Endothelial cell of umbilical vein (primary cell): ENCODE measurements at regions of chr14 and their contacts with region 1.

Region 1: DNA sequence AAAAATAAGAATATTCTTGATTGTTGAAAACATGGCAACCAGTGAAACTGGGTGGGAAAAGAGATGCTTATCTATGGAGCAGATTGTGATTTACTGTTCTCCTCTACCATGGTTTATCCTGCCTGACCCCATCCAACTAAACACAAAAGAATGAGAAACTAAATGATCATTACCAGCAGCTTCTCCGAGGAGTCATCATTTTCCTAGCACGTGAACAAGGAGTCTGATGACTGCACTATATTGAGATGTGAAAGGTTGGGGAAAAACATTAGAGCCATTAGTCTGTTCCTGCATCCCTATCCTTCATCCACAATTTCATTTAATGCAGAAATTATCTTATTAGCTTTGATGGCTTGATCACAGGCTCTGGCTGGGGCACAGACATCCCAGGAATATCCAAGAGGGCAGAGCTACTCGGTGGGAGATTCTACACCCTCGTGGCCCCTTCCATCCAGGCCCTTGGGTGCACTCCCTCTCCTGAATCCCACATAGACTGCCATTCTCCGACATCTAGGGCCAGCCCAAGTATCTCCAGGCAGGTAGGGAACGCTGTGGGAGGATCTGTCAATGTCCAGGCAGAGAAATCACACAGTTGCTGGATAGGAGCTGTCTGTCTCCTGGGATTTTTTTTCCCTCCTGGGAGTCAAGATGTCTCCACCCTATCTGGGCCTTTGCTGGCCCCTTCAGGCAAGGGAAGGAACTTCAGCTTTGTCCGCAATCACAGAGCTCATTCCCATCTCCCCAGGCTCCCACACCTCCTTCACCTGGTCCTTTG is 43.3 kb upstream of the DHRS4 start:
- DNase-seq: peak; percentile 58
- H3K4me3 ChIP-seq: no peak overlapping the region
- H3K27ac ChIP-seq: no peak overlapping the region
- H3K4me1 ChIP-seq: no peaks in the 10 kb centered on the region
- H3K27me3 ChIP-seq: peaks cover 0 to 3% of the 10 kb centered on the region in 2 experiments
- CTCF ChIP-seq: peak; percentile 66 to 84
- POLR2A ChIP-seq: no peak

Region 2: DNA sequence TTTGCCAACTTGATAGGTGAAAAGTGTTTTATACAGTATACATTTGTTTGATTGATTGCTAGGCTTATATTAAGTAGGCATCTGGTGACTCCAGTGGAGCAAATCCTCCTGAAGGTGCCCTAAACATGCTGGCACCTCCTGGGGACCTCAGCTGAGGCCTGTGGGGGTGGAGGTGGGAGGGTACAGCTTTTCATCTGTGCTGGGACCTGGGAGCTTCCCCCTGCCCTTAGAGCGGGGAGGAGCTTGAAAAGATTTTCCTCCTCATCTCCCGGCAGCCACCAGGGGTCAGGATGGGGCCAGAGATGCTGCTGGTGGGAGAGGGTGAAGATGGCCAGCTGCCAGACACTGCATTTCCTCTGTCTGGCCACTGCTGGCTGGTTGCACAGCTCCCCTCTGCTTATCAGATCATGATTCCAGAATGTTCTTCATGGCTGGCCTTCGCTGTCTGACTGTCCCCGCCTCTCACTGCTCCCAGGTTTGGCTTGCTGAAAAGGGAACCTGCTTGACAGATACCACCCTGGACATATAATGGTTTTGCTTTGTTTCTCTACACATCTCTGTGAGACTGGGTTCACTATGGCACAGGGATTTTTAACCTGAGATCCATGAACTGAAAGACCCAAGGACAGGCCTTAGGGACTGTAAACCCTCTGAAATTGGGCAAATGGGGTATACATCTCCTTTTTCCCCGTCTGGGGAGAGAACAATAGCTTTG is 321.2 kb before region 1 on chr14:
- CTCF ChIA-PET with region 1: interaction called, 95 read pairs
- POLR2A ChIA-PET with region 1: no interaction called
- dilution Hi-C with region 1: no loop called
- intact Hi-C with region 1: loop called (anchors 1 kb)
- DNase-seq: peak; percentile 87
- H3K4me3 ChIP-seq: no peak overlapping the region
- H3K27ac ChIP-seq: no peak overlapping the region
- H3K4me1 ChIP-seq: peaks cover 5% of the 10 kb centered on the region
- H3K27me3 ChIP-seq: no peaks in the 10 kb centered on the region
- CTCF ChIP-seq: peak; percentile 76 to 90
- POLR2A ChIP-seq: no peak

Region 3: GRCh38 chr14:23665375-23666192 is 244.7 kb before region 1 on chr14:
- CTCF ChIA-PET with region 1: interaction called, 224 read pairs
- POLR2A ChIA-PET with region 1: no interaction called
- dilution Hi-C with region 1: no loop called
- intact Hi-C with region 1: loop called (anchors 1 kb)
- DNase-seq: peak; percentile 55
- H3K4me3 ChIP-seq: no peak overlapping the region
- H3K27ac ChIP-seq: no peak overlapping the region
- H3K4me1 ChIP-seq: no peaks in the 10 kb centered on the region
- H3K27me3 ChIP-seq: peaks cover 0 to 2% of the 10 kb centered on the region in 2 experiments
- CTCF ChIP-seq: peak; percentile 48 to 62
- POLR2A ChIP-seq: no peak

Region 4: DNA sequence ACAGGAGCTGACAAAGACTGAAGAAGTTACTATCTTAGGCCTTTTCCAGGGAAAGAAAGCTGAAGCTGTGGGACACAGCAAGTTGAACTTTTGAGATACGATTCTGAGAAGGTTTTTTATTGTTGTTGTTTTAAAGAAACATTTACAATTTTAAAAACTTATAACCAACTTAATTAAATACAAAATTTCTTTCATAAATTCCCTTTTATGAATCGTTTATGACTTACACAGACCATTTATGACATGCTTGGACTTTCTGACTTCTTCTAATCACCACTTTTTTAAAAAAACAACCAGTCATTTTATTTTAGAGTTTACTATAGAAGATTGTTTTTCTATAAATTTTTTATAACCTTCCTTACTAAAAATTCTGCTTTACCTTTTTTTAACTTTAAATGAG is 205.4 kb before region 1 on chr14:
- CTCF ChIA-PET with region 1: no interaction called
- POLR2A ChIA-PET with region 1: no interaction called
- dilution Hi-C with region 1: no loop called
- intact Hi-C with region 1: no loop called
- DNase-seq: no peak
- H3K4me3 ChIP-seq: no peak overlapping the region
- H3K27ac ChIP-seq: no peak overlapping the region
- H3K4me1 ChIP-seq: no peaks in the 10 kb centered on the region
- H3K27me3 ChIP-seq: no peaks in the 10 kb centered on the region
- CTCF ChIP-seq: no peak
- POLR2A ChIP-seq: no peak

Region 5: DNA sequence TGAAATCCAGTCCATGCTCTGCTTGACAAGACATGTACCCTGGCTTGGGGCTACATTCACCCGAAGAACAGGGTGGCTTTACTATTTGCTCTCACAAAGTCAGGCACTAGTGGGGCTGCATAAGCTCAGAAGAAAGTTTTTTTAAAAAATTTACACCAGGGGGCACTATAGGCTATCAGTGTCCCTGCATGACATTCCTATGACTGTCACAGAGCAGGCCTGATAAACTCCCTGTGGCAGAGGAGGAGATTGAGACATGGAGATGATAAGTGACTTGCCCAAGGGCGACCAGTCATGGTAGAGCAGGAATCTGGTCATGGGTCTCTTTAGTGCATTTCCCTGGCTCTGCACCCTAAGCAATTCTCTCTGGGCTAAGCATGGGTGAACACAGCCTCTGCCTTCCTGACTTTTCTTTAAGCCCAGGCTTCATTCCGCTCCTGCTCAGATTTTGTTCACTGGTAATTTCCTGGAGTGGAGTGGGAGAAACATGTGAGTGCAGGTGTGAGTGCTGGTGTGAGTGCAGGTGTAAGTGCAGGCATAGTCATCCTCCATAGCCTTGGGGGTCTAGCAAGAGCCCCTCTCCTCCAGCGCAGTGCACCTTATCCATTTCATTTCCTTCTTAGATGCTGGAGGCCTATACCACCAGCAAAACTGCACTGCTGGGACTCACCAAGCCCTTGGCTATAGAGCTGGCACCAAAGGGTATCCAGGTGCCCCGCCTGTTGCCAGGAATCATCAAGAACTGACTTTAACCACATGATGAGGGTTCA is 182.5 kb before region 1 on chr14:
- CTCF ChIA-PET with region 1: interaction called, 189 read pairs
- POLR2A ChIA-PET with region 1: no interaction called
- dilution Hi-C with region 1: no loop called
- intact Hi-C with region 1: loop called (anchors 1 kb)
- DNase-seq: peak; percentile 37
- H3K4me3 ChIP-seq: no peak overlapping the region
- H3K27ac ChIP-seq: no peak overlapping the region
- H3K4me1 ChIP-seq: no peaks in the 10 kb centered on the region
- H3K27me3 ChIP-seq: no peaks in the 10 kb centered on the region
- CTCF ChIP-seq: peak; percentile 27 to 32
- POLR2A ChIP-seq: no peak

Region 6: DNA sequence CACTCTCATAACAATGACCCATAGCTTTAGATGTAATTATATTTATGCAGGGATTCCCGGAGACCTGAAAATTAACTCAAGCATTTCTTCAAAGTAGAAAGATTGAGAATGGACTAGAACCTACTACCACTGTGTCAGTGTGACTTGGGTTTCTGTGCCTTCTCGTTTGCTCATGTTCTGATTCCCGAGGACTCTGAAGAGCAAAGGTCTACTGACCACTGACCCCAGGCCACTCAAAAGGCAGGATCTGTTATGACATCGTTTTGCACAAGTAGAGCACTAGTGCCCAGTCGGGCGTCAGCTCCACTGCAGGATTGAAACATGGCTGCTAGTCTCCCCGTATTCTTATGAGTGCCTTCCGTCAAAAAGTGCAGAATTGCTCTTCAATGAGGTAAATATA is 10.5 kb before region 1 on chr14:
- CTCF ChIA-PET with region 1: interaction called, 11 read pairs
- POLR2A ChIA-PET with region 1: interaction called, 6 read pairs
- dilution Hi-C with region 1: no loop called
- intact Hi-C with region 1: no loop called
- DNase-seq: no peak
- H3K4me3 ChIP-seq: no peak overlapping the region
- H3K27ac ChIP-seq: no peak overlapping the region
- H3K4me1 ChIP-seq: no peaks in the 10 kb centered on the region
- H3K27me3 ChIP-seq: no peaks in the 10 kb centered on the region
- CTCF ChIP-seq: no peak
- POLR2A ChIP-seq: no peak

Region 7: DNA sequence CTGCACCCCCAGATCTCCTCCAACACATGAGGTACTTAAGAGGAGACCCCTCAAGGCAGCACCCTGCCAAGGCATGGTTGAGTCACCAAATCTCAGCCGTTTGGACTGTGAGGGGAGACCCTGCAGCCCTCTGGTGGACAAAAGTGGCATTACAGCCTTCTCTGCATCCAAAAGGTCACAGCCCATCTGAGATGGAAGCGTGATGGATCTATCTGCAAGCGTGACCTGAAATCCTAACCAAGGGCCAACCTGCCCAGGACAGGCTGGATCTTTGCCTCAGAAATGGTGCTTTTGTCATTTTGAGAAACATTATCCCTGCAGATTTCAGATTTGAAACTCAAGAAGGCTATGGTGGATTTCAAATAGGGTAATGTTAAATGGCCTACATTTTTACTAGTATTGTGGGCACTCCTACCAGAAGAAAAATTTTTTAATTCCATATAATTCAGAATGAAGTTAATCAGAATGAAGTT is 19.6 kb after region 1 on chr14:
- CTCF ChIA-PET with region 1: interaction called, 14 read pairs
- POLR2A ChIA-PET with region 1: no interaction called
- dilution Hi-C with region 1: no loop called
- intact Hi-C with region 1: no loop called
- DNase-seq: peak; percentile 74
- H3K4me3 ChIP-seq: no peak overlapping the region
- H3K27ac ChIP-seq: no peak overlapping the region
- H3K4me1 ChIP-seq: no peaks in the 10 kb centered on the region
- H3K27me3 ChIP-seq: peaks cover 0 to 5% of the 10 kb centered on the region in 2 experiments
- CTCF ChIP-seq: peak; percentile 93
- POLR2A ChIP-seq: no peak

Region 8: DNA sequence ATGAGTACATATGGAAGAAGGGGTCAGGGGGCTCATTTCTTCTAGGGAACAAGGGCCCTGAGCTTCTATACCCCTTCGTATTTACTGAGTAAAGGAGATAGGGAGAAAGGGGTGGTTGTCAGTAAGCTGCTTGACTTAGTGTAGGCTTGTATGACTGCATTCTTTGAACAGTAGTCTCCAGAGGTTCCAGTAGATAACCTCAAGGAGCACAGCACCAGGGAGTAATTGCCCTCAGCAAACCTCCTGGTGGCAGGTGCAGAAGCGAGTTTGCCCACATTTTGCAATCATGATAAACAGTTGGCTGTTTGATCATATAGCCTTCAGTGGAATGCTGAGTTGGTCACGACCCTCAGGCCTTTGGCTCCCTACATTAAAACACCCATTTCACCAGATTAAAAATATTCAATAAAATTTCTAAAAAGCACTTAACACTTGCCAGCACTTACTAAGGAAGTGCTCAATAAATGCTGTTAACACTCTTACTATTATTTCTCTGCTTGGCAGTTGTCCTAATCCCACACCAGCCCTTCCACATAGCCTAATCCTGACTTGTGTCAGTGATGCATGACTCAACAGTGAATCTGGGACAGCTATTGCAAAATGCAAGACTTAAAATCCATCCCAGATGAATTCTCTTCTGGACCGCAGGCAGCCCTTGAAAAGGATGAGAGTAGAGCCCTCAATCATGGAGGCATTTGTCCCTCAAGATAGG is 74.8 kb after region 1 on chr14:
- CTCF ChIA-PET with region 1: no interaction called
- POLR2A ChIA-PET with region 1: no interaction called
- dilution Hi-C with region 1: no loop called
- intact Hi-C with region 1: no loop called
- DNase-seq: no peak
- H3K4me3 ChIP-seq: no peak overlapping the region
- H3K27ac ChIP-seq: no peak overlapping the region
- H3K4me1 ChIP-seq: peaks cover 4% of the 10 kb centered on the region
- H3K27me3 ChIP-seq: no peaks in the 10 kb centered on the region
- CTCF ChIP-seq: no peak
- POLR2A ChIP-seq: no peak